ENCODE measurements at regions of chr12 and their contacts with region 1.

Region 1: DNA sequence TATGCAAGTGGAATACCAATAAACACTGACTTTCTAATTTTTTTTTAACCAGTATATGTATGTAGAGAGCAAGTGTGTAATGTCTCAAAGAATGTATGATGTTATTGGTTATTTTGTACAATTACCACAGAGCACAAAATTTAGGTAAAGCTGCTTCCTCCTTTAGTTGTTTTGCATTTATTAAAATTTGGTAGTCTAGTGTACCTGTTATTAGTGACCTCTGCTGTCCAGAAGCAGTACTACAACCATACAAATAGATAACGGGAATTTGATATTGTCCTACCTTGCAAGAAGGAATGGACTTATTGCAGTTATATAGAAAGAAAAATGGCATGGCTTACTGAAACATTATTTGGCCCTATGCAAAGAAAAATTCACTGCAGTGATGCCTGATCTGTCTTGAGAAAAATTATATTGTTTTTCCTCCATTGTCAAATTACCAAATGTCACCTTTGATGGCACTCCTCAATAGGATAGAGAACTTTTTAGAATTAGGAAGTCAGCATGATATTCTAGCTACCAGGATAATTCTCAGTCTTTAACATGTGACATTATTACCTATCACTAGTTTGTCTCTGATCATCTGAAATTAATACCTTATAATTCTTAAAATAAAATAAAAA is 153.9 kb upstream of the RMST start:
- DNase-seq: peak; percentile 55
- H3K4me3 ChIP-seq: no peak overlapping the region
- H3K27ac ChIP-seq: no peak overlapping the region
- H3K4me1 ChIP-seq: peaks cover 21% of the 10 kb centered on the region
- CTCF ChIP-seq: peak; percentile 91

Region 2: GRCh38 chr12:96578526-96579125 is 730.1 kb before region 1 on chr12:
- CTCF ChIA-PET with region 1: no interaction called
- POLR2A ChIA-PET with region 1: no interaction called
- intact Hi-C with region 1: loop called (anchors 2 kb)
- DNase-seq: peak; percentile 73
- H3K4me3 ChIP-seq: no peak overlapping the region
- H3K27ac ChIP-seq: no peak overlapping the region
- H3K4me1 ChIP-seq: peaks cover 5% of the 10 kb centered on the region
- CTCF ChIP-seq: peak; percentile 90

Region 3: DNA sequence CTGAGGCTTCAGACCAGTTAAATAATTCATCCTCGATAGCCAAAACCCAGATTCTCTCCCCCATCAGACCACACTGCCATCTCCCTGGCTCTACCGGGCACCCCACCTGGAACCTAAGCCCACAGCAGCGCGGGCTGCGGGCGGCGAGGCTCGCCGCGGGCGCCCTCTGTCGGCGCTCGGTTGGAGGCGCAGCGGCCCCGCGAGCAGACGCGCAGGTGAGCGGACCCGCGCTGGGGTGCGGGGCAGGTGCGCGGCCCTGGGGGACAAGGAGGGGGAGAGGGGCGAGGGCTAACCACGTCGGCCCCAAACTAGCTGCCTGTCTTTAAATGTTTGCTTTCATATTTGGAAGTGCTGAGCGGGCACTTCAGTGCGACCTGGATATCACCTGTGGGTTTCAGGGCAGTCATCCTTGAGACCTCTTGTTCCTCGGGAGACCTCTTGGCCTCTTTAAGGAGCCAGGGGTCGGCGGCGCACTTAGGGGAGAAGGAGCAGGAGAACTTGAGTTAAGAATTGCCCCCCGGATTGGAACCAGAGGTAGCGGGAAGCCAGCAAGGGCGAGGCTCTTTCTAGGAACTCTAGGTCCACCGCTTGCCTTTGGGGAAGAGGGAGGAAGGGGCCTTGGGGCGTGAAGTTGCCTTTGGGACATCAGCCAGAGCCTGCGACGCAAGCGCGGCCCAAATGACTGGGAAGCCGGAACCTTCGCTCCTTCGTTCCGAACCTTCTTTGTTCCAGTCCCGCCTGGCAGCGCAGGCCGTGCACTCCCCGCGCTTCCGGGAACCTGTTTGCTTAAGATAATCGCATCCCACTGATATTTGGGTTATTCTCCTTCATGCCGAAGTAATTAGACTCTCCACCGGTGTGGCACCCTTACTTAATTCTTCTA is 323.0 kb before region 1 on chr12:
- CTCF ChIA-PET with region 1: no interaction called
- POLR2A ChIA-PET with region 1: no interaction called
- intact Hi-C with region 1: loop called (anchors 5 kb)
- DNase-seq: peak; percentile 27
- H3K4me3 ChIP-seq: no peak overlapping the region
- H3K27ac ChIP-seq: no peak overlapping the region
- H3K4me1 ChIP-seq: peaks cover 3% of the 10 kb centered on the region
- CTCF ChIP-seq: peak; percentile 82

Region 4: GRCh38 chr12:97097734-97098133 is 211.0 kb before region 1 on chr12:
- CTCF ChIA-PET with region 1: no interaction called
- POLR2A ChIA-PET with region 1: no interaction called
- intact Hi-C with region 1: no loop called
- DNase-seq: no peak
- H3K4me3 ChIP-seq: no peak overlapping the region
- H3K27ac ChIP-seq: no peak overlapping the region
- H3K4me1 ChIP-seq: no peaks in the 10 kb centered on the region
- CTCF ChIP-seq: no peak

Region 5: DNA sequence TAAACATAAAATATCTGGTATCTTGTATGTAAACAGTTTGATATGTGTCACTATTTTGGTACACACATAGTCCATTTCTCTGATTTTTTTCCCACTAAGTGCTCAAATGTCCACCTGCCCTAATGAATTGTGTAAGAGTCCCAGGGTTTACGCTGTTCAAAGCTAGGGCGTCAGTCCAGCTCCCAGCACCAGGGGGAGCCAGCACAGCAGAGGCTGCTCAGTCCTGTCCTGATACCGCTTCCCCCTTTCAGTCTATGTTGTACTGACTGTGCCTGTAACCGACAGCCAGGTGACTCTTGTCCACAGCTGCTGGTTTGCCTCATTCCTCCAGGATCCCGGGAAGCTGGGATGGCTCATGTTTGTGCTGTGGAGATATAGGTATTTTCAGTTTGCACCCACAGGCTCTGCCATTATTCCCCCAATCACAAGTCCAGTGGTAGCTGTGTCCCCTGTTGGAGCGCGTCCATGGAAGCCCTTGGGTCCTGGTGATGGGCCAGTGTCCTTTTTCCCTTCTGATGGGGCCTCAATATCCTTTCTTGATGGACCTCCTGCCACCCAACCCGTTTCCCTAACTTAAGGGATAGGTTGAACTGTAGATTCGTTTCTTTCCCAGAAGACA is 159.6 kb before region 1 on chr12:
- CTCF ChIA-PET with region 1: no interaction called
- POLR2A ChIA-PET with region 1: no interaction called
- intact Hi-C with region 1: loop called (anchors 5 kb)
- DNase-seq: peak; percentile 65
- H3K4me3 ChIP-seq: no peak overlapping the region
- H3K27ac ChIP-seq: no peak overlapping the region
- H3K4me1 ChIP-seq: no peaks in the 10 kb centered on the region
- CTCF ChIP-seq: peak; percentile 90

Region 6: GRCh38 chr12:97375310-97375709 is 66.6 kb after region 1 on chr12:
- CTCF ChIA-PET with region 1: no interaction called
- POLR2A ChIA-PET with region 1: no interaction called
- intact Hi-C with region 1: no loop called
- DNase-seq: no peak
- H3K4me3 ChIP-seq: no peak overlapping the region
- H3K27ac ChIP-seq: no peak overlapping the region
- H3K4me1 ChIP-seq: no peaks in the 10 kb centered on the region
- CTCF ChIP-seq: no peak

Region 7: DNA sequence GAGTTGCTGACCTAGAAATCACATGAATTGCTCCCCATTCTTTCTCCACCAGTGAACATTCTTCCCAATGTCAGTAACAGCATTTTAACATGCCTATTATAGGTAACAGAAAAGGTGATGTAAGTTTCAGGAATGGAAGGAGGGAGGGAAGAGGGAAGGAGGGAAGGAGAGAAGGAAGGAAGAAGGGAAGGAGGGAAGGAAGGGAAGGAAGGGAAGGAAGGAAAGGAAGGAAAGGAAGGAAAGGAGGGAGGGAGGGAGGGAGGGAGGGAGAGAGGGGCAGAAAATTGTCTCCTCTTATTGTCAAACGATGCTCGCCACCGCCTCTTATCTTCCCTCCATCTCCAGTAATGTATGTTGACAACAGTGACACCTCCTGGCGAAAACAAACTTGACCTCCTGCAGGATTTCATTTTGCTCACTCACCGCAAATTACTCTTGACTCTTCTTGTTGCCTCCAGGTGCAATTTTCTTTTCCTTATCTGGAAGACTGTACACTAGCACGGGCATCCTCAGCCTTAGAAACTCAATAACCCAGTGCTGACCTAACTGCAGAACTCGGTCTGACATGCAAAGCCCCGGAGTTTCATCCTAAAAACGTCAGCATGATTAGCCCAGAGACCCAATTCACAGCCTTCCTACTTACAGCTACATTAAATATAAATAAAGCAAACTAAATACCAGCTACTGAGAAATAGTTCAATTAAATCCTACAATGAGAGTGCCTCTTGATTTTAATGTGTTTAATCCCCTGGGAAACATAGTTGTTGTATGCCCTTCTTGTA is 694.2 kb after region 1 on chr12:
- CTCF ChIA-PET with region 1: no interaction called
- POLR2A ChIA-PET with region 1: no interaction called
- intact Hi-C with region 1: loop called (anchors 5 kb)
- DNase-seq: peak; percentile 56
- H3K4me3 ChIP-seq: no peak overlapping the region
- H3K27ac ChIP-seq: no peak overlapping the region
- H3K4me1 ChIP-seq: no peaks in the 10 kb centered on the region
- CTCF ChIP-seq: peak; percentile 75

Region 8: GRCh38 chr12:98397316-98398105 is 1088.8 kb after region 1 on chr12:
- CTCF ChIA-PET with region 1: no interaction called
- POLR2A ChIA-PET with region 1: no interaction called
- intact Hi-C with region 1: loop called (anchors 2 kb)
- DNase-seq: peak; percentile 89
- H3K4me3 ChIP-seq: peak overlapping the region; percentile 62
- H3K27ac ChIP-seq: peak overlapping the region; percentile 31
- H3K4me1 ChIP-seq: peaks cover 50% of the 10 kb centered on the region
- CTCF ChIP-seq: peak; percentile 92

Measured in OCI-LY7 (cell line).